ENCODE measurements at regions of chr12 and their contacts with region 1.

Region 1: GRCh38 chr12:121005346-121005815 is 10.9 kb downstream of the C12orf43 start:
- DNase-seq: peak; percentile 73
- H3K4me3 Mint-ChIP-seq: no peak overlapping the region
- H3K27ac Mint-ChIP-seq: peak overlapping the region; percentile 17
- H3K4me1 Mint-ChIP-seq: peaks cover 5% of the 10 kb centered on the region
- H3K27me3 Mint-ChIP-seq: no peaks in the 10 kb centered on the region

Region 2: DNA sequence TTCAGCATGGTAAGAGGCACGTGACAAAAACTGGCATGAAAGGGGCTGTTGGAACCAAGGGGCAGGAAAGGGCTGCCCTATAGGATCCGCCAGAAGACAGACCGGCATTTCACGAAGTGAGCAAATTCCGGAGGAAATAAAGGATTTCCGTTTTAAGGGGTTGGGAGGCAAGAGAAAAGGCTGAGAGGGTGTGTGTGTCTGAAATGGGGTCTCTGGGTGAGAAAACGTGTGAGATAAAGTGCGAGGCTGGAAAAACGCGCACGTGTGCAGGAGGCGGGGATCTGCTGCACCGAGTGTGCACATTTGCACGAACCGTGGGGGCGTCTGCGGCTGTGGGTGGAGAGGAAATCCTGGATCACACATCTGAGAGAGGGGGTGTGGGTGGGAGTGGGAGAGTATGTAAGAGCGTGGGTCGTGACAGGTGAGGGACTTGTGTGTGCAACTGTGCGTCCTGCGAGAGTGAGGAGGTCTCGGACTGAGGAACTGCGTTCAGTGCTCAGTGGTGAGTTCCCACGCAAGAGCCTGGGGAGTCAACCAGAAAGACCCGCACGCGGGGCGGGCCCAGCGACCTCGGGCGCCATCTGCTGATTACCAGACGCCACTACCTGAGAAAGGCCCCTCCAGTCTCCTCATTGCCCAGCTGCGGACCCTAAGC is 90.3 kb after region 1 on chr12:
- CTCF ChIA-PET with region 1: interaction called, 10 read pairs
- POLR2A ChIA-PET with region 1: no interaction called
- DNase-seq: peak; percentile 84
- H3K4me3 Mint-ChIP-seq: peak overlapping the region; percentile 71
- H3K27ac Mint-ChIP-seq: peak overlapping the region; percentile 28
- H3K4me1 Mint-ChIP-seq: peaks cover 40% of the 10 kb centered on the region
- H3K27me3 Mint-ChIP-seq: peaks cover 12% of the 10 kb centered on the region

Region 3: GRCh38 chr12:121110211-121110940 is 105.0 kb after region 1 on chr12:
- CTCF ChIA-PET with region 1: interaction called, 15 read pairs
- POLR2A ChIA-PET with region 1: no interaction called
- DNase-seq: peak; percentile 73
- H3K4me3 Mint-ChIP-seq: no peak overlapping the region
- H3K27ac Mint-ChIP-seq: no peak overlapping the region
- H3K4me1 Mint-ChIP-seq: peaks cover 8% of the 10 kb centered on the region
- H3K27me3 Mint-ChIP-seq: no peaks in the 10 kb centered on the region